Psoas muscle (tissue), 8 donors: ENCODE measurements at regions of chr2 and their contacts with region 1.

Region 1: DNA sequence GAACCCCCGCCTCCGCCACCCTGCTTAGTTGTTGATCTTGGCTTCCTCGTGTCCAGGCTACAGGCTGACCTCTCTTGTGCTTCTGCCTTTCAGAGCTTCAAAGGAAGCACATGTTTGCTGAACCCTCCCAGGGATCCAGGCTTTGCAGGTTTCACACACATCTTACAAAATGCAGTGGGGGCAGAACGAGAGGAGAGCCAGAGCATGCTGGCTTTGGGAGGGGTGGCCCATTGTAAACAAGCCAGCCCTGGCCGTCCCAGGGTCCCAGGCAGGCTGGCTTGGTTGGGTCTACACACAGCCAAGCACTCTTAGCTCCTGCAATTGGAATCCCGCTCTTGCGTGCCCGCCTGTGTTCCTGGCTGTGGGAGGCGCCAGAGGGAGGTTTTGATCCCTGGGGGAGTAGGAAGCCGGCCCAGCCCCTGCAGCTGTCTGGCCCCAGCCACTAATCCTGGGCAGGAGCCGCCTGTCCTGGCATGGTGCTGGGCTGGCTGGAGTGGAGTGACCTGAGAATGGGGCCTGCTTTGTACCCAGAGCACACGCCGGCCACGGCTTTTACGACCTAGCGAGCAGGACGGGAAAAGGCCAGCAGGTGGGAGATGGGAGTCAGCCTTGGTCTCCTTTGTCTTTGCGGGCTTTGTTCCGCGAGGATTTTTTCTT is 53.9 kb downstream of the SH3BP4 start:
- DNase-seq: peak; percentile 80 to 91
- ATAC-seq: peak; percentile 91 to 95 (median 94)
- H3K4me3 ChIP-seq: no peak overlapping the region
- H3K27ac ChIP-seq: no peak overlapping the region
- H3K4me1 ChIP-seq: peaks cover 11% of the 10 kb centered on the region
- H3K27me3 ChIP-seq: no peaks in the 10 kb centered on the region
- CTCF ChIP-seq: peak; percentile 23

Region 2: GRCh38 chr2:235055891-235056516 is 50.3 kb after region 1 on chr2:
- intact Hi-C with region 1: loop called in 1 of 2 experiments (anchors 2 kb)
- DNase-seq: no peak
- ATAC-seq: peak; percentile 66 to 84 (median 74)
- H3K4me3 ChIP-seq: no peak overlapping the region
- H3K27ac ChIP-seq: no peak overlapping the region
- H3K4me1 ChIP-seq: peaks cover 8% of the 10 kb centered on the region
- H3K27me3 ChIP-seq: no peaks in the 10 kb centered on the region
- CTCF ChIP-seq: peak; percentile 61

Region 3: GRCh38 chr2:235106874-235107639 is 101.3 kb after region 1 on chr2:
- intact Hi-C with region 1: loop called in 1 of 2 experiments (anchors 5 kb)
- DNase-seq: peak; percentile 39 to 76
- ATAC-seq: peak in 3 of 4 donors; percentile 54 to 74 (median 62)
- H3K4me3 ChIP-seq: no peak overlapping the region
- H3K27ac ChIP-seq: no peak overlapping the region
- H3K4me1 ChIP-seq: peaks cover 3% of the 10 kb centered on the region
- H3K27me3 ChIP-seq: no peaks in the 10 kb centered on the region
- CTCF ChIP-seq: peak; percentile 57